GM10248 (cell line): ENCODE measurements at regions of chr1 and their contacts with region 1.

Region 1: DNA sequence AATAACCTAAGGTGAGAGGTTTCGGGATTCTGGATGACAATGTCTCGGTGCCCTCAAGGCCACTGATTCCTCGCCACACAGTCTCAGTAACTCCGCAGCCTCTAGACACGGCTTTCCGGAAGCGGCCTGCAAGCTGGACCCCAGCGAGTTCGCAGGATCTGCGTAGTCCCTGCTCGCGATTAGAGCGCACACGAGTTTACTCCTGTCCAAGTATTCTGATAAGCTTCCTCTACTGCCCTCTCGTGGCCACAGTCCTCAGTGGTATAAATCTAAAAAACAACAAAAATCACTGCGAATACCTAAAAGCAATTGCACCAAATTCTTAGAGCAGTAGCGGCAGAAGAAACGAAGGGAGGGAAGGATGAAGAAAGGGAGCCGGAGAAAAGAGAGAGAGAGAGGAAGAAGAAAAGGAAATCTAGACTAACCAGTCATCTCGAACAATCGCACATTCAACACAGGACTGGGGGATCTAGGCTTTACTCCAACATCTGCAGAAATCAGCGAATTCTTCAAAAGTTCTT is 1.1 kb upstream of the PLXNA2 start:
- DNase-seq: peak; percentile 77
- CTCF ChIP-seq: peak; percentile 78

Region 2: DNA sequence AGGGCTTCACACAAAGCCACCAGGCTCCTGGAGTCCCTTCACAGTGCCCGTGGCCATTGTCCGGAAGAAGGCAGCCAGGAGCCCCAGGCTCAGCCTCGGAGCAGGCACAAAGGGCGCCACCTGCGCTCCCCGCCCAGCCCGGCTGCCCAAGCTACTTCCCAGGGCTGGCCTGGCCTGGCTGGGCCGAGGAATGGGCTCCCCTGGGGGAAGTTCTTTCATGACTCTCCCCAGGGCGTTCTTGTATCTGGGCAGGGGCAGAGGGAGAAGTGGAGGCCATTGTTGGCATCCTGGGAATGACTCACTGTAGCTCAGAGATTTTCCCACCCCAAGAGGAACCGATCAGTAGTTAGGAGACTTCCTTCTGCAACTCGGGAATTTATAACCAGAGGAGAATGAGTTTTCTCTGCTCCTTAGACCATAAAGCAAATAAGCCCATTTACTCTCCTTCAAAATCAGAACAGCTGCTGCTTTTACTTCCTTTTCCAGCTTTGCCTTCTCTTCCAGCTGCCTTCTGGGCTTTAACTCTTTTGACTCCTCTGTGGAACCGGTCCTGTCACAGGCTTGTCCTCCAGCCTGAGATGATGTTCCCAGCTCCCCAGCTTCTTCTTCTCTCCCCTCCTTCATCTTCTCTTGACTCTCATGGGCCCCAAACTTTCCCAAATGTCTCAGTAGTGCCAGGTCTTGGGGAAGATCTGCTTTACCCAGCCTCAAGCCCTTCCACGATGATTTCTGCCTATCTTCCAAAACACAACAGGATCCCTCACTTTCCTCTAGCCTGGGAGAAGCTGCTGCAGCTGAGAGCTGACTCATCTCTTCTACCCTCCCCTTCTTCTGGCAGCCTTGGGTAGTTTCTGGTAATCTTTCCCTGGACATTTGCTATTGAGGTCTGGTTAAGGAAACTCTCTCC is 215.6 kb before region 1 on chr1:
- CTCF ChIA-PET with region 1: interaction called, 189 read pairs
- POLR2A ChIA-PET with region 1: no interaction called
- DNase-seq: no peak
- CTCF ChIP-seq: no peak

Region 3: GRCh38 chr1:208110296-208110695 is 134.9 kb before region 1 on chr1:
- CTCF ChIA-PET with region 1: interaction called, 20 read pairs
- POLR2A ChIA-PET with region 1: no interaction called
- DNase-seq: no peak
- CTCF ChIP-seq: no peak

Region 4: GRCh38 chr1:208132287-208132883 is 112.9 kb before region 1 on chr1:
- CTCF ChIA-PET with region 1: interaction called, 187 read pairs
- POLR2A ChIA-PET with region 1: no interaction called
- DNase-seq: peak; percentile 84
- CTCF ChIP-seq: peak; percentile 86

Region 5: DNA sequence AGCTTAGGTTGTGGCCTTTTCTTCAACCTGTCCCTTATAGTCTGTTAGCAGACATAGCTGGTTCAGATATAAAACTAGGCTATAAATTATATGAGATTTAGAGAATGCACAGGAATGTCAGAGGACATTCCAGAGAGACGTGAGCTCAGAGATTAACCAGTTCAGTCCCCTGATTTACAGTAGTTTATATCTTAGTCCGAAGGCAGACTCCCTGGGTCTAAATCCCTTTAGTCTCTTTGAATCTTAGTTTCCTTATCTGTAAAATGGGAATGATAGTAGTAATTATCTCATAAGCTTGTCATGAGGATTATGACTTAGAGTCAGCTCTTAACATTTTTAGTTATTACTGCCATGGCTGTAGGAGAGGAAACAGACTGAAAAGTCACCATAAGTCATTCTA is 44.5 kb after region 1 on chr1:
- CTCF ChIA-PET with region 1: interaction called, 10 read pairs
- POLR2A ChIA-PET with region 1: no interaction called
- DNase-seq: no peak
- CTCF ChIP-seq: no peak